Activated CD4-positive, alpha-beta T cell treated with anti-CD3 and anti-CD28 coated beads, Interleukin-2, amount 10 ng/mL, durations not matched to agents 24 days and 14 days (primary cell): ENCODE measurements at regions of chr6 and their contacts with region 1.

Region 1: DNA sequence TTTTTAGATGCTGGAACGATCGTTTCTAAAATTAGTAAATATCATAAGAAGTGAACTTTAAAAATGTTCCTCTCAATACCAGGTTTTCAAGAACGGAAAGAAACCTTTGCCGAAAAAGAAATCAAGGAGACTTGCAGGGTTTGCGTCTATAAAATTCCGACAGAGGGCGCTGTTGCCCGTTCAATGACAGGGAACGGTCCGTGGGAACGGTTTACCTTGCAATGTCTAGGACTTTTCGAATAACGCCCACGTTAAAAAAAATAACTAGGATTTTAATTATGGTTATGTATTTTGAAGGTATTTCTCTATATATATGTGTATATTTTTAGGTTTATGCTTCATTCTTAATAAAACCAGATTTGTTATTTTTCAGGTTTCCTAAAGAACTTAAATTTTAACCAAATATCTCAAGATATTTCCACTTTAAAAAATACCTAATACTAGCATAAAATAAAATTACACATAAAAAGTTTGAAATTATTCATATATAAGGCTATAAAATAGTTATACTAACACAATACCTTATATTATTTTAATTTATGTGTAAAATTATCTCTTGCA is 2.5 kb upstream of the TFAP2B start:
- DNase-seq: peak; percentile 89
- H3K4me3 Mint-ChIP-seq: peak overlapping the region; percentile 90
- H3K27ac Mint-ChIP-seq: peak overlapping the region; percentile 60
- H3K4me1 Mint-ChIP-seq: peaks cover 13% of the 10 kb centered on the region
- H3K27me3 Mint-ChIP-seq: peaks cover 60% of the 10 kb centered on the region

Region 2: GRCh38 chr6:50716899-50717509 is 99.2 kb before region 1 on chr6:
- intact Hi-C with region 1: loop called (anchors 2 kb)
- DNase-seq: no peak
- H3K4me3 Mint-ChIP-seq: no peak overlapping the region
- H3K27ac Mint-ChIP-seq: no peak overlapping the region
- H3K4me1 Mint-ChIP-seq: peaks cover 2% of the 10 kb centered on the region
- H3K27me3 Mint-ChIP-seq: peaks cover 75% of the 10 kb centered on the region

Region 3: DNA sequence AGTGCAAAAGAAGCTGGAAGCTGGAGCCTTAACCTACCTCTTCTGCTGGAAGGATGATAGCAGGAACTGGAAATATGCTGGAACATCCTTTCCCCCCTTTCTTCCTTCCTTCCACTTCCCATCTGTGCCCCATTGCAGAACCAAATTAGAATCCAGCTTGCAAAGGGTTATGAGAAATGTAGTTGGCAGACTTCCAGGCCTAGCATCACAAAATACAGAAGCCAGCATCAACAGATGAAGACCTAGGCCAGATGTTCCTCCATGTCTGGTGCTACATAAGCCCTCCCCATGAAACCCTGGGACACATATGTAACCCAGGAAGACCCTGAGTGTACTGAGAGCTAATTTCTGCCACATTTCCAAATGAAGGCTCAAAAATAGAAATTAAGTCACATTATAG is 37.5 kb before region 1 on chr6:
- intact Hi-C with region 1: no loop called
- DNase-seq: no peak
- H3K4me3 Mint-ChIP-seq: no peak overlapping the region
- H3K27ac Mint-ChIP-seq: no peak overlapping the region
- H3K4me1 Mint-ChIP-seq: no peaks in the 10 kb centered on the region
- H3K27me3 Mint-ChIP-seq: no peaks in the 10 kb centered on the region

Region 4: GRCh38 chr6:50843842-50844241 is 27.6 kb after region 1 on chr6:
- intact Hi-C with region 1: loop called (anchors 2 kb)
- DNase-seq: no peak
- H3K4me3 Mint-ChIP-seq: no peak overlapping the region
- H3K27ac Mint-ChIP-seq: no peak overlapping the region
- H3K4me1 Mint-ChIP-seq: no peaks in the 10 kb centered on the region
- H3K27me3 Mint-ChIP-seq: peaks cover 86% of the 10 kb centered on the region

Region 5: GRCh38 chr6:51350308-51350904 is 534.2 kb after region 1 on chr6:
- intact Hi-C with region 1: loop called (anchors 2 kb)
- DNase-seq: no peak
- H3K4me3 Mint-ChIP-seq: no peak overlapping the region
- H3K27ac Mint-ChIP-seq: no peak overlapping the region
- H3K4me1 Mint-ChIP-seq: no peaks in the 10 kb centered on the region
- H3K27me3 Mint-ChIP-seq: no peaks in the 10 kb centered on the region

Region 6: GRCh38 chr6:51753635-51754034 is 937.4 kb after region 1 on chr6:
- intact Hi-C with region 1: loop called (anchors 2 kb)
- DNase-seq: peak; percentile 58
- H3K4me3 Mint-ChIP-seq: no peak overlapping the region
- H3K27ac Mint-ChIP-seq: no peak overlapping the region
- H3K4me1 Mint-ChIP-seq: no peaks in the 10 kb centered on the region
- H3K27me3 Mint-ChIP-seq: no peaks in the 10 kb centered on the region

Region 7: GRCh38 chr6:51855310-51856082 is 1039.3 kb after region 1 on chr6:
- intact Hi-C with region 1: loop called (anchors 10 kb)
- DNase-seq: peak; percentile 77
- H3K4me3 Mint-ChIP-seq: no peak overlapping the region
- H3K27ac Mint-ChIP-seq: no peak overlapping the region
- H3K4me1 Mint-ChIP-seq: no peaks in the 10 kb centered on the region
- H3K27me3 Mint-ChIP-seq: no peaks in the 10 kb centered on the region

Region 8: DNA sequence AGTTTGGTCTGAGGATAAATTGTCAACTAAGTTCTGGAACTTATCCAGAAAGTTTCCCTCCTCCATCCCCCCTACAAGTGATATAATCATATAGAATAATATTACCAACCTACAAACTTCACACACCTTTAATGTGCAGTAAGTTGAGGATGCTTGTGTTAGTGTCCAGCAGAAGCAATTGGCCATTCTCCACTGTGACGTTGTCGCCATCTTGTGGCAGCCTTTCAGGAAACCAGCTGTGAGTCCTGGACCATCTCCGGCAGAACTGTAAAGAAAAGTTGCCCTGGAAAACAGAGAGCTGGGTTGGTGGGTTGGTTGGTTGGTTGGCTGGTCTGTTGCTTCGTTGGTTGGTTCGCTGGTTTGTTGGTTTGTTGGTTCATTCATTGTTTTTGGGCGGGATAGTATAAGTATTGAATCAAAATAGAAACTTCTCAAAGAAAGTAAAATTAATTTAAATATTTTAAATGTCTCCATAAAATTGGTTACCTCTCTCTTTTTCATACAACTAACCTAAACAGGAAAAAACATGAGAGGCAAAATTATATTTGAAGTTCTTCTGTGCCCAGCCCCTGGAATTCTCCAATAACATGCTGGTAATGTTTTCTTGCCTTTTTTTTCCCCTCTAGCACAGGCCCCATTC is 1143.7 kb after region 1 on chr6:
- intact Hi-C with region 1: loop called (anchors 2 kb)
- DNase-seq: peak; percentile 81
- H3K4me3 Mint-ChIP-seq: no peak overlapping the region
- H3K27ac Mint-ChIP-seq: no peak overlapping the region
- H3K4me1 Mint-ChIP-seq: peaks cover 1% of the 10 kb centered on the region
- H3K27me3 Mint-ChIP-seq: peaks cover 3% of the 10 kb centered on the region